PC-3 (cell line): ENCODE measurements at regions of chr20 and their contacts with region 1.

Region 1: GRCh38 chr20:63911176-63911575 is 16.2 kb downstream of the DNAJC5 start:
- DNase-seq: peak; percentile 92
- ATAC-seq: peak; percentile 96
- H3K4me3 ChIP-seq: peak overlapping the region; percentile 41
- H3K27ac ChIP-seq: peak overlapping the region; percentile 74
- H3K4me1 ChIP-seq: peaks cover 28% of the 10 kb centered on the region
- H3K27me3 ChIP-seq: no peaks in the 10 kb centered on the region
- CTCF ChIP-seq: no peak

Region 2: GRCh38 chr20:63864847-63865640 is 46.1 kb before region 1 on chr20 and contains the start of gene TPD52L2:
- CTCF ChIA-PET with region 1: no interaction called
- POLR2A ChIA-PET with region 1: interaction called, 12 read pairs
- intact Hi-C with region 1: no loop called
- DNase-seq: peak; percentile 99
- ATAC-seq: peak; percentile 86
- H3K4me3 ChIP-seq: peak within 1 kb of the TSS; percentile 90
- H3K27ac ChIP-seq: peak within 1 kb of the TSS; percentile 77
- H3K4me1 ChIP-seq: peaks cover 10% of the 10 kb centered on the region
- H3K27me3 ChIP-seq: no peaks in the 10 kb centered on the region
- CTCF ChIP-seq: no peak
- total RNA-seq, gene TPD52L2: 147 and 167 TPM in 2 replicates

Region 3: DNA sequence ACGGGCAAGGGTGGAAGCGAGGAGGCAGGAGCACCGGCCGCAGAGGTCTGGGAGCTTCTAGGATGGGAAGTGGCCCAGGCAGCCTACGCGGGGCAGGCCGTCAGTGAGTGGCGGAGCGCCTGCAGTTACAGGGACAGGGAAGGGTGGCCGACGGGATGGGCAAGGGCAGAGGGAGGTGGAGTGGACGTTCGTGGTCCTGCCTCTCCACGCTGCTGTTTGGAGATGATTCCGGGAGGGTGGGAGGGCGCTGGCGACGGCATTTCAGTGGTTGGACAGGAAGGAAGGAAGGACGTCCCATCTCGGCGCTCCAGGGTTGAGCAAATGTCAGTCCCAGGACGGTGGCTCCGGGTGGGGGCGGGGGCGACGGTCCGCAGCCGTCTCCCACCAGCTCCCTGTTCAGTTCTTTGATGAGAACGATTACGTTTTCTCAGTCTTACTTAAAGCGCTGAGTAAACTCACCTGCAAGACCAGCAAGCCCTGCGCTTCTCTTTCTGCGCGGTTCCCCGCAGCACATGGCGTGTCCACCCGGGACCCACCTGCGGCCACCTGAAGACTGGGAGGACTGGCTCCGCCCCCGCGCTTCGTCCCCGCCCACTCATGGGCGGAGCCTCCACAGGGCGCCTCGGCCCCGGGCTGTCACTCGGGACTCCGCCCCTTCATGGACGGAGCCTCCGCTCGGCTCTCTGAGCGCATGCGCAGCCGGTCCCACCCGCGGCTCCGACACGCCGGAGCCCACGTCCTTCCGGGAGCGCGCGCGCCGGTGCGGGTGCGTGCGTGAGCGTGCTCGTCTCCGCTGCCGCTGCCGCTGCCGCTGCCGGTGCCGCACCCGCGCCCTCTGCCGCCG is 16.6 kb before region 1 on chr20 and contains the start of gene DNAJC5:
- CTCF ChIA-PET with region 1: no interaction called
- POLR2A ChIA-PET with region 1: no interaction called
- intact Hi-C with region 1: loop called (anchors 2 kb)
- DNase-seq: peak; percentile 98
- ATAC-seq: peak; percentile 89
- H3K4me3 ChIP-seq: peak within 1 kb of the TSS; percentile 75
- H3K27ac ChIP-seq: peak within 1 kb of the TSS; percentile 48
- H3K4me1 ChIP-seq: peaks cover 26% of the 10 kb centered on the region
- H3K27me3 ChIP-seq: no peaks in the 10 kb centered on the region
- CTCF ChIP-seq: no peak
- total RNA-seq, gene DNAJC5: 73.7 and 80.1 TPM in 2 replicates

Region 4: DNA sequence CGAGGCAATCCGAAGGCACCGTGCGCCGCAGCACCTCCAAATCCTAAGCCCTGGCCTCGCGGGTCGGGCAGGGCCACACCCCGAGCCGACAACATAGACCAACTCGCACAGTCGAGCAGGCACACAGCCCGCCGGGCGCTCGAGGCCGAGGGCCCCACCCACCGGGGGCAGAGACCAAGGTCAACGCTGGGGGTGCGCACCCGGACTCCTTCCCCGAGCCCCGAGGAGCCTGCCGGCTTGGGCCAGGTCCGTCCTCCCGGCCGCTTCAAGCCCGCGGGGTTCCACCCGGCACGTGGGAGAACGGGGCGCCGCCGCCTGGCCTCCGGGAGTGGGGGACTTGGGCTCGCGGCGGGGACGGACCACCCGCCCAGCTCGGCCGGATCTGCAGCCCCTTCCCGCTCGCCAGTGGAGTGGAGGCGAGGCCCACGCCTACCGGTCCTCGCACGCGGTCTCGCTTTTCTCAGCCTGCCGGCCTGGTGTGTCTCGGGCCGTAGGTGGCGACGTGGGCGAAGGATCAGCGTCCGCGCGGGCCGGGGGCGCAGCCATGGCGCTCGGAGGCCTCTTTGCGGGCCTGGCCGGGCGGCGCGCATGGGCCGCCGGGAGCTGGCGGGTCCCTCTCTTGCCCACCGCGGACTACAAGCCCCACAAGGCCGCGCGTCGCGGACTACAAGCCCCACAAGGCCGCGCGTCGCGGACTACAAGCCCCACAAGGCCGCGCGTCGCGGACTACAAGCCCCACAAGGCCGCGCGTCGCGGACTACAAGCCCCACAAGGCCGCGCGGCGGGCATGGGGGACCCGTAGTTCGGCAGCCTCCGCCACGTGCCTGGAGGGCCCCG is 44.9 kb after region 1 on chr20 and contains the start of gene UCKL1:
- CTCF ChIA-PET with region 1: interaction called, 3 read pairs
- POLR2A ChIA-PET with region 1: interaction called, 3 read pairs
- intact Hi-C with region 1: loop called (anchors 2 kb)
- DNase-seq: peak; percentile 83
- ATAC-seq: peak; percentile 72
- H3K4me3 ChIP-seq: peak within 1 kb of the TSS; percentile 95
- H3K27ac ChIP-seq: peak within 1 kb of the TSS; percentile 91
- H3K4me1 ChIP-seq: peaks cover 33% of the 10 kb centered on the region
- H3K27me3 ChIP-seq: no peaks in the 10 kb centered on the region
- CTCF ChIP-seq: no peak
- total RNA-seq, gene UCKL1: 37.2 and 47.4 TPM in 2 replicates

Region 5: DNA sequence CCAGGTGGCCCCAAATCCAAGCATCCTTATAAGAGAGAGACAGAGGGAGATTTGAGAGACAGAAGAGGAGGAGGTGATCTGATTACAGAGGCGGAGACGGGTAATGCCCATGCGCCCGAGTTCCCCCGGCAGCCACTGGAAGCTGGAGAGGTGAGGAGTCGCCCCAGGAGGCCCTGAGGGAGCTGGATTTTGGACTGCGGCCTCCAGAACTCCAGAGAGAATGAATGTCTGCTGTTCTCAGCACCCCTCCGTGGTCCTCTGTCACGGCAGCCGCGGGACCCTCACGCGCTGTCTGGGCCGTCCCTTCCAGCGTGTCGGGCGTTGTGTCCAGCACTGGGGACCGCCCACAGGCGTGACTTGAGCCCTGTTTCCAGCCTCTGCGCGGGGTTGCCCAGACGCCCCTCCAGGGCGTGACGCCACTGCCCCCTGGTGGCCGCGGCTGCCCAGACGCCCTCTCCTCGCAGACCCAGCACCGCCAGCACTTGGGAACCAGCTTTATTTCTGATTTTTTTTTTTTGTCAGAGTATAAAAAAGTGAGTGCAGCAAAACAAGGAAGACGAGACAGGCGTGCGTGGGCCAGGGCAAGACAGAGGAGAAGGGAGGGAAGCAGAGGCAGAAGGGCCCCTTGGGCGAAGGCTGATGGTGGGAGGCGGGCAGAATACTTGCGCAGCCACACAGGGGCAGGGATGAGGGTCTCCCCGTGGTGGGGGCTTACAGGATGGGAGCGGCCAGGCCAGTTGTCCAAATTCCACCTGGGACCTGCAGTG is 62.6 kb after region 1 on chr20:
- CTCF ChIA-PET with region 1: interaction called, 7 read pairs
- POLR2A ChIA-PET with region 1: no interaction called
- intact Hi-C with region 1: loop called (anchors 1 kb)
- DNase-seq: peak; percentile 84
- ATAC-seq: peak; percentile 67
- H3K4me3 ChIP-seq: peak overlapping the region; percentile 30; the same call in 1 of the 2 replicates
- H3K27ac ChIP-seq: no peak overlapping the region
- H3K4me1 ChIP-seq: peaks cover 17% of the 10 kb centered on the region
- H3K27me3 ChIP-seq: no peaks in the 10 kb centered on the region
- CTCF ChIP-seq: peak; percentile 97